ENCODE measurements at regions of chr5 and their contacts with region 1.

Region 1: DNA sequence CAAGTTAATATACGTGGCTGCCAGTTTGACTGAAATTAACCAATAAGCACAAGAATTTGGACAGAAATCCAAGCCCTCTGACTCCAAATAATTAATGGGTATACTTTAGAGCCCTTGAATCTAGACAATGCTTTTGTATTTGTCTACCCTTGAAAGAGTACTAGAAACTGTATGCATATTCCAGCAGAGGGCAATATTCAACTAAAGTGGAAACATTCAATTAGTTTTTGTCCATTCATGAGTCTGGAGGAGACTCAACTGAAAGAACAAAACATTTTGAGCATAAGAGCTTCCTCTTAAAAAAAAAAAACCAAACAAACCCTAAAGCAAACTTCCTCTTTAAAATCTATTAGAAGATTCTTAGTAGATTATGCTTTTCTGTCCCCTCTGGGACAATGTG is 157.8 kb downstream of the ARHGEF28 start:
- DNase-seq: peak; percentile 77 to 92 (median 90)
- H3K4me3 ChIP-seq: no peak overlapping the region
- H3K27ac ChIP-seq: no peak overlapping the region
- H3K4me1 ChIP-seq: no peaks in the 10 kb centered on the region
- H3K27me3 ChIP-seq: peaks cover 0 to 2% (median 0%) of the 10 kb centered on the region in 5 experiments

Region 2: DNA sequence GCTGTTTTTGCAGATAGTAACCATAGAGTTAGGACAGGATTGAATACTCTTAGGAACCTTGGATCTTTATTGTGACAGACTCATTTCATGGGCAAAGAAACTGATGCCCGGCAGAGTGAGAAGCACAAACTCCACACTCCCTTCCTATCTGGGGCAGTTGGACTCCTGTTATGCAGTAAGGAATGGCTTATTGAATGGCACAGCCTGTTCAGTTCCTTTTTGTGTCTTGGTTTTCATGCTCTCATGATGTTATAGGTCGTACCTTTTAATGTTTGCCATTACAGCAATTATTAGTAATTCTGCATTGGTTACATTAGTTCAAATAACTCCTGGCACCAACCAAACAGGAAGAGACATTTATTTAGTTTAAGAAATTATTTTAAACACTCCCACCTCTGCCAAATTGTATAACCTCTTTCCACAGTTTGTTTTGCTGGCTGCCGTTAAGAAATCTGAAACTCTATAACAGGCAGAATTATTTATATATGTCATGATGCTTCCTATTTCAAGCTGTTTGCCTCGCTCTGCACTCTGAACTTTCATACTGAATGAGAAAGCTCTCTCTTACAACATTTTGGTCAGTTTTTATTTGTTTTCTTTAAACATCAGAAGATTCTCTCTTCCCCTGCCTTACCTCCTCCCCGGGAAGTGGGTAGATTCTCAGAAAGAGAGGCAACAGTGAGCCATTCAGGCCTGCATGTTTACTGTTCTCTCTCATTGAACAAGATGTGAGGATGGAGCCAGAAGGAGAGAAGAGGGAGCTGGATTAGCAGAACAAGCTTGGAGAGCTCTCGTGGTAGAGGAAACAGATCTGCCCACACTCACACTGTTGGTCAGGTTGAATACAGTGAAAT is 13.4 kb before region 1 on chr5:
- CTCF ChIA-PET with region 1: interaction called, 15 read pairs
- POLR2A ChIA-PET with region 1: no interaction called
- DNase-seq: no peak
- H3K4me3 ChIP-seq: no peak overlapping the region
- H3K27ac ChIP-seq: no peak overlapping the region
- H3K4me1 ChIP-seq: peaks cover 0 to 4% (median 0%) of the 10 kb centered on the region in 4 experiments
- H3K27me3 ChIP-seq: no peaks in the 10 kb centered on the region

Region 3: GRCh38 chr5:73805449-73805848 is 21.6 kb after region 1 on chr5:
- CTCF ChIA-PET with region 1: no interaction called
- POLR2A ChIA-PET with region 1: no interaction called
- DNase-seq: peak; percentile 16 to 56 (median 34)
- H3K4me3 ChIP-seq: no peak overlapping the region
- H3K27ac ChIP-seq: no peak overlapping the region
- H3K4me1 ChIP-seq: no peaks in the 10 kb centered on the region
- H3K27me3 ChIP-seq: no peaks in the 10 kb centered on the region